OCI-LY7 (cell line): ENCODE measurements at regions of chr2 and their contacts with region 1.

Region 1: GRCh38 chr2:26144953-26145680 is 27.8 kb upstream of the GAREM2 start:
- DNase-seq: peak; percentile 77
- H3K4me3 ChIP-seq: no peak overlapping the region
- H3K27ac ChIP-seq: no peak overlapping the region
- H3K4me1 ChIP-seq: peaks cover 4% of the 10 kb centered on the region
- CTCF ChIP-seq: peak; percentile 97

Region 2: DNA sequence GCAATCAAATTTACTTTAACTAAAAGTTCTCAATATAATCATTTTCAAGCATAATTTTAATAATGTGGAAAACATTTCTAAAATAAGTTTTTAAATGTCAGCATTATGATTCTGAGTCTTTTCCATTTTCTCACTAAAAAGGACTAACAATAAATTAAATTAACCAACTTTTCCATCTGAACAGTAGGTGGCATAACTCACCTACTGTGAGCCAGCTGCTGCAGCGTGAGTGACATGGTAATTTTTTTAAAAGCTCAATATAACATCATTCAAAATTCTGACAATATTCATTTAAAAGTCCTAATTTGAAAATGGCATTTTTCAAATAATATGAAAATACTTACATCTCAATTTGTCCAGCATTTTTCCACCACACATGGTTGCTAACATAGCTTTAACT is 538.2 kb before region 1 on chr2:
- CTCF ChIA-PET with region 1: no interaction called
- POLR2A ChIA-PET with region 1: no interaction called
- intact Hi-C with region 1: loop called (anchors 10 kb)
- DNase-seq: peak; percentile 47
- H3K4me3 ChIP-seq: no peak overlapping the region
- H3K27ac ChIP-seq: no peak overlapping the region
- H3K4me1 ChIP-seq: no peaks in the 10 kb centered on the region
- CTCF ChIP-seq: peak; percentile 93

Region 3: DNA sequence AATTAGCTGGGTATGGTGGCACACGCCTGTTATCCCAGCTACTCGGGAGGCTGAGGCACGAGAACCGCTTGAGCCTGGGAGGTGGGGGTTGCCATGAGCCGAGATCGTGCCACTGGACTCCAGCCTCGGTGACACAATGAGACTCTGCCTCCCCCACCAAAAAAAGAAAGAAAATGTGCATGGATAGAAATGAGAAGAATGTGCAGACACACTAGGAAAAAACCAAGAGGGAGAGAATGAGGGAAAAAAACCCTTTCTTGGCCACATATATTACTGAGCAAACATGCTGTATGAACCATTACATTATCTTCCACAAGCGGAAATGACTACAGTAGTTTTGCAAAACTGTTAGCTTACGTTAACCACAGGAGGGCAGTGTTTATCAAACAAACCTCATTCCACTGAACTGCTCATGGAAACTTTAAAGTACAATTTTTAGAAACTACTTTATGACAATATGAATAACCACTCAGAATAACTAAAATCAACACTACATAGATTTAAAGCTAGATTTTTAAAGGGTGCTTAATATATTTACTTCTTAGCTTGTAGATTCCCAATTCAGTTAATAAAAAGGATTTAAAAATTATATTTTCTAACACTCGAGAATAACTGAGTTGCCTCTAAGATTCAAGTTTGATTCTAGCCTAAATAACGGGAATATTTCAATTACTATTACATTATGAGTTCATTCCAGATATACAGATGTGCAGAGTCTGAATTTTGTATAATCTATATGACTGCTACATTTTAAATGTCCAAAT is 293.2 kb before region 1 on chr2:
- CTCF ChIA-PET with region 1: no interaction called
- POLR2A ChIA-PET with region 1: no interaction called
- intact Hi-C with region 1: loop called (anchors 1 kb)
- DNase-seq: peak; percentile 78
- H3K4me3 ChIP-seq: no peak overlapping the region
- H3K27ac ChIP-seq: peak overlapping the region; percentile 11
- H3K4me1 ChIP-seq: peaks cover 19% of the 10 kb centered on the region
- CTCF ChIP-seq: peak; percentile 90

Region 4: DNA sequence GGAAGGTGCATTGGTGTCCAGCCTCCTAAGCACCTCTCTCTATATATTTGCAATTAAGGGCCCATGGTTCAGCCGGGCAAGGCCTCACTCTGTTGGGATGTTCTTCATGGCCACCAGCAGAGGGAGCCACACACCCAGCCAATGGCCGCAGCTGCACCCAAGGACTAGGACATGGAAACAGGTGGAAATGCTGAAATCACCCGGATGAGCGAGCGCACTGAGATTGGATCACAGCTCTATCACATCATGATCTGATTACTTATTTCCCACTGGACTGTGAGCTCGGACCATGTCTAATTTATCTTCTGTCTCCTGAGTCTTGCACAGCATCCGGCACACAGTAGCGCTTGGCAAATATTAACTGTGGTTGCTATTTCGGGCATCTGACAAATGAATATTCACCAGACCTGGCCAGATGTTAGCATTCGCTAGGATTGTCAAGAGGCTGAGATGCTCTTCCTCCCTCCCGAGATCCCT is 194.0 kb before region 1 on chr2:
- CTCF ChIA-PET with region 1: interaction called, 3 read pairs
- POLR2A ChIA-PET with region 1: no interaction called
- intact Hi-C with region 1: loop called (anchors 1 kb)
- DNase-seq: peak; percentile 77
- H3K4me3 ChIP-seq: no peak overlapping the region
- H3K27ac ChIP-seq: no peak overlapping the region
- H3K4me1 ChIP-seq: peaks cover 19% of the 10 kb centered on the region
- CTCF ChIP-seq: peak; percentile 99

Region 5: DNA sequence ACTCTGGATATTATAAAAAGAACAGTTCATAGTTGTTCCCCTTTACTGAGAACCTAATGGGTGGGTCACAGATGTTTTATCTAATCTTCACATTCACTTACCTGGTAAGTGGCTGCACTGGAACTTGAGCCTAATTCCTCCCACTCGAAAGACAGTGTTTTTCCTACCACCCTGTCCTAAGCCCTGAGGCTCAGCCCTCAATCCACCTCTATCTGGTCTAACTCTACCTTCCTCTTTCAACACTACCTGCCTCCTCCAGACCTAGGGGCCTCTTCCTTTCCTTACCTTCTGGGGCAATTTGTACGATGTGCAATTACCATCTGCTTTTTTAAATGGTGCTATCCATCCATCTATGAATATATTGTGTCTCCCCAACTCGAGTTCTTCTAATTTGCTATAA is 153.2 kb before region 1 on chr2:
- CTCF ChIA-PET with region 1: interaction called, 3 read pairs
- POLR2A ChIA-PET with region 1: interaction called, 6 read pairs
- intact Hi-C with region 1: loop called (anchors 1 kb)
- DNase-seq: no peak
- H3K4me3 ChIP-seq: no peak overlapping the region
- H3K27ac ChIP-seq: no peak overlapping the region
- H3K4me1 ChIP-seq: no peaks in the 10 kb centered on the region
- CTCF ChIP-seq: no peak

Region 6: DNA sequence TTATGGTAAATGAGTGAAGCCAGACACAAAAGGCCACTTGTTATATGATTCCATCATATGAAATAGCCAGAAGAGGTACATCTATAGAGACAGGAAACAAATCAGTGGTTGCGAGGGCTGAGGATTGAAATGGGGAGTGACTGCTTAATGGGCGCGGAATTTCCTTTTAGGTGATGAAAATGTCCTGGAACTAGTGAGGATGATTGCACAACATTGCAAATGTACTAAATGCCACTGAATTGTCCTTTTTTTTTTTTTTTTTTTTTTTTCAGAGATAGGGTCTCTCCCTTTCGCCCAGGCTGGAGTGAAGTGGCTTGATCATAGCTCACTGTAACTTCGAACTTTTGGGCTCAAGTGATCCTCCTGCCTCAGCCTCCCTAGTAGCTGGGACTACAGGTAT is 12.5 kb after region 1 on chr2:
- CTCF ChIA-PET with region 1: no interaction called
- POLR2A ChIA-PET with region 1: no interaction called
- intact Hi-C with region 1: no loop called
- DNase-seq: no peak
- H3K4me3 ChIP-seq: no peak overlapping the region
- H3K27ac ChIP-seq: no peak overlapping the region
- H3K4me1 ChIP-seq: no peaks in the 10 kb centered on the region
- CTCF ChIP-seq: no peak